HEK293 (cell line): ENCODE measurements at regions of chr6 and their contacts with region 1.

Region 1: DNA sequence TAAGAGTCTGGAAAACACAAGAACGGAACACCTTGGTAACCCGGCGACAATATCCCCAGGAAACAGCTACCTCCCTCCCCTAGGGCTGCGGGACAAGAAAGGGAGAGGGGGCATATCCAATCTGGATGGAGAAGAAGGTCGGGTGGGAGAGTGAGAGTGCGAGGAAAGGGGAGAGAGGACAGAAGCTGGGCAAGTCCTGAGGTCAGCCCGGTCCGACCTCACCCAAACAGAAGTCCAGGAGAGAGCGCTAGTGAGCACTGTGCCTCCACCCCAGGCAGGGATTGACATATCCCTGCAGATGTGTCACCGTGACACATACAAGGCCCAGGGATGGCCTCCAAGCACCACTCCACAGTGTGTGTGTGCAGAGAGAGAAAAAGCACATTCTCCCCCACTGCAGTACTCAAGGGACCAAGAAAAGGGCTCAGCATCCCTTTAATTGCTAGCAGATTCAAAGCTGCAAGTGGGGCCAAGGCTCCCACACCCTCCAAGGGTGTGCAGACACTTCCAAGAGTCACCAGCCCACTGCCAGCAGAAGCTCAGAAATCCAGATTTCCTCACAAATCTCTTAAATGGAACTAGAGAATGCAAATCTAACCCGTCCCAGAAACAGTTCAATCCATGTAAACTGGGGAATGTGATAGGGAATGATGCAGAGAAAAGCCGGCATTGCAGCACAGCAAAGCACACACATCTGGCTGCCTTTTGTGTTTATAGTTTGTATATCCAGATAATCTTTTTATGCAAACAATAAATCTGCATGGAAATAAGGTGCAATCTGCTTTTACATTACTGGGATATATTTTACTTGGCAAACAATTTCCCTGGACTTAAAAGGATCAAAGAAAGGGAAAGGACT is 3.1 kb downstream of the PXDC1 start:
- H3K4me3 ChIP-seq: no peak overlapping the region
- H3K27ac ChIP-seq: no peak overlapping the region
- H3K4me1 ChIP-seq: peaks cover 3% of the 10 kb centered on the region; the same call in 1 of the 2 replicates
- CTCF ChIP-seq: peak; percentile 76

Region 2: GRCh38 chr6:3383525-3383924 is 364.9 kb before region 1 on chr6:
- CTCF ChIA-PET with region 1: no interaction called
- POLR2A ChIA-PET with region 1: no interaction called
- H3K4me3 ChIP-seq: no peak overlapping the region
- H3K27ac ChIP-seq: no peak overlapping the region; the same call in 1 of the 2 replicates
- H3K4me1 ChIP-seq: peaks cover 51% of the 10 kb centered on the region
- CTCF ChIP-seq: no peak

Region 3: DNA sequence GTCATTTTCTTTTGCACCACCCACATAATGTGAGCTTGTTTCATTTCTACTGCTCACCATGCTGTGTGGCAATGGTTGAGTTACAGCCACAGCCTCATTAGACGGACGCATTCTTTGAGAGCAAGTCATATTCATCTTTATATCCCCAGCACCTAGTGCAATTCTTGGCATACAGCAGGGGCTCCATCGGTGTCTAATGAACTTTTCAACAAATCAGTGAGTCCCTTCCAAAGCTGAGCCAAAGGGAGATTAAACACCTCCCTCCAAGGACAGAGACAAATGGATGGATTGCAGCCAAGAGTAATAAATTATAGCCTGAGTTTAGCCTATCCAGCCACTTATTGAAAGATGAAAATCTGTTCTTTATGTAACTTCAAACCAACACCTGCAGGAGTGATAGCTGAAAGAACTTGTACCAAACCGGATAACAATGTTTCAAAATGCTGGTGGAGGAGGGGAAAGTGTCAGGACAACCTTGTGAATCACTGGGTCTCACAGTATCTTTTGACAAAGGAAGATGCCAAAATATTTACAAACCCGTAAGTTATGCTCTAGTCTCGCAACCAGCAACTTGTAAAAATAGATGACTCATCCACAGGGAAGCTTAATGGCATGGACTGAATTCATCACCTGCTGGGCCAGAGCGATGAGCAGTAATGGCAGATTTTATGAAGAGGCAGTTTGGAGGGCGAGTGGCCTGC is 135.9 kb before region 1 on chr6:
- CTCF ChIA-PET with region 1: no interaction called
- POLR2A ChIA-PET with region 1: no interaction called
- H3K4me3 ChIP-seq: no peak overlapping the region; the same call in 1 of the 2 replicates
- H3K27ac ChIP-seq: peak overlapping the region; percentile 74
- H3K4me1 ChIP-seq: peaks cover 51% of the 10 kb centered on the region
- CTCF ChIP-seq: no peak

Region 4: DNA sequence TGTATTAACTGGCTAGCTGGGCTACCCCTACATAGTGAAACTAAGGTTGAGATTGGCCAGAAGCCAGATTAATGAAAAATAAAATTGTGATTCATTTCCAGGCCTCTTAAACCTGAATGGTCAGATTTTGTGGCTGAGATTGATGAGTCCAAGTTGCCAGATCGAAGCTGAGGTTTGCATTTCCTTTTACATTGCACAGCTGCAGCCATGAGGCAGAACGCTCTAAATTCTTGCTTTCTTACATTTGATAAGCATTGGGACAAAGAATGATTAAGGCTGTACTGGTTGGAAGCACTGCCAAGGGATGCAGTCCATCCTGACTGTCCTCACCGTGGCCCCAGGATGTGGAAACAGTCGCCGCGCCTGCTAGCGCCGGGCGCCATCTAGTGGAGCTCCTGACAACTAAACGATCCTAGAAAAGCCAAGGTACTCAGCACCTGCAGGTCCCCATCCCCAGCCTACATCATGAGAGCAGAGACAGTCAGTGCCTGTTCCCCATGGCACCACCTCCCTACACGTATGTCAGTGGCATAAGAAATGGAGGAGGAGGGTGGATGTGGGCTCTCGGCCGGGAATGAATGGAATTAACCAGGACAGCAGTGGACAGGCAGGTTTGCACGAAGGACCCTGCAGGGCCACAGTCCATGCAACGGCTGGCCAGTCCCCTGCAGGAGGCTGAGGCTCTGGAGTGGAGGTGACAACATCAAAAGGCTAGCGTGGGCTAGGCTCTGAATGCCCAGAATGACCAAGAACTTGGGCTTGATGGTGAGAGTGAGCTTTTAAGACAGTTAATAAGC is 15.9 kb before region 1 on chr6:
- CTCF ChIA-PET with region 1: interaction called, 36 read pairs
- POLR2A ChIA-PET with region 1: no interaction called
- H3K4me3 ChIP-seq: no peak overlapping the region
- H3K27ac ChIP-seq: no peak overlapping the region
- H3K4me1 ChIP-seq: no peaks in the 10 kb centered on the region
- CTCF ChIP-seq: peak; percentile 88

Region 5: GRCh38 chr6:3913077-3913957 is 164.9 kb after region 1 on chr6:
- CTCF ChIA-PET with region 1: interaction called, 10 read pairs
- POLR2A ChIA-PET with region 1: interaction called, 3 read pairs
- H3K4me3 ChIP-seq: no peak overlapping the region
- H3K27ac ChIP-seq: peak overlapping the region; percentile 44
- H3K4me1 ChIP-seq: peaks cover 31% of the 10 kb centered on the region
- CTCF ChIP-seq: no peak

Region 6: DNA sequence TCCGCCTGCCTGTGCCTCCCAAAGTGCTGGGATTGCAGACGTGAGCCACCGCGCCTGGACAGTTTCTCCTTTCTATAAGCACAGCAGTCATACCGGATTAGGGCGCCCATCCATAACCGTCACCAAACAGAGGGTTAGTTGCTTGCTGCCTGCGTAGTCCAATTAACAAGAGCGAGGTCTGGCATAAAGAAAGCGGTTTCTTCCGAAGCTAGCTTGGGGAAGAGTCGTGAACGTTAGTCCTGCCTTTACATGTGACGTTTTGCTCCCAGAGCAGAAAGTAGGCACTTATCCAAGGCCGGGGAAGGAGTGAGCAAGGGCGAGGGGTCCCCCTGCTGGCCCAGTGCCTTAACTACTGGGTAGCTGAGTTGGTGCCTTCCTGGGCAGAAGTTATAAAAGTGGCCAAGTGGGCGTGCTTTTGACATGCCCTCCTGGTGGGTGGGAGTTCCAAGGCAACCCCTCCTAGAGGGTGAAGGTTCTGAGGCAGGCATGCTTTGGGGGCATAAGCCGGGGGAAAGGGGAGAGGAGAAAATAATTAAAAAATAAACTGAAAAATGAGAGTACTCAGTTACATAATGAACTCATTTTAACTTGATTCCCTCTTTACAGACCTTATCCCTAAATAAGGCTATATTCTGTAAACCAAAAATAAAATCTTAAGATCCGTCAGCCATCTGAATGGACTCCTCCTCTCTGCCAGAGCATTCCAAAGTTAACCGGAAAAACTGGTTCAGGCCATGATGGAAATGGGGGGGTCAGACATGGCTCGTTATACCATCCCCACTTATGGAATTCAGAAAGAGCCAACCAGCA is 242.5 kb after region 1 on chr6:
- CTCF ChIA-PET with region 1: interaction called, 24 read pairs
- POLR2A ChIA-PET with region 1: interaction called, 3 read pairs
- H3K4me3 ChIP-seq: no peak overlapping the region
- H3K27ac ChIP-seq: no peak overlapping the region; the same call in 1 of the 2 replicates
- H3K4me1 ChIP-seq: no peaks in the 10 kb centered on the region
- CTCF ChIP-seq: peak; percentile 94

Region 7: GRCh38 chr6:4018172-4018905 is 269.9 kb after region 1 on chr6:
- CTCF ChIA-PET with region 1: interaction called, 7 read pairs
- POLR2A ChIA-PET with region 1: interaction called, 20 read pairs
- H3K4me3 ChIP-seq: peak overlapping the region; percentile 93
- H3K27ac ChIP-seq: peak overlapping the region; percentile 100
- H3K4me1 ChIP-seq: peaks cover 5% of the 10 kb centered on the region; the same call in 1 of the 2 replicates
- CTCF ChIP-seq: peak; percentile 94